Calu3 (cell line): ENCODE measurements at regions of chr1 and their contacts with region 1.

Region 1: DNA sequence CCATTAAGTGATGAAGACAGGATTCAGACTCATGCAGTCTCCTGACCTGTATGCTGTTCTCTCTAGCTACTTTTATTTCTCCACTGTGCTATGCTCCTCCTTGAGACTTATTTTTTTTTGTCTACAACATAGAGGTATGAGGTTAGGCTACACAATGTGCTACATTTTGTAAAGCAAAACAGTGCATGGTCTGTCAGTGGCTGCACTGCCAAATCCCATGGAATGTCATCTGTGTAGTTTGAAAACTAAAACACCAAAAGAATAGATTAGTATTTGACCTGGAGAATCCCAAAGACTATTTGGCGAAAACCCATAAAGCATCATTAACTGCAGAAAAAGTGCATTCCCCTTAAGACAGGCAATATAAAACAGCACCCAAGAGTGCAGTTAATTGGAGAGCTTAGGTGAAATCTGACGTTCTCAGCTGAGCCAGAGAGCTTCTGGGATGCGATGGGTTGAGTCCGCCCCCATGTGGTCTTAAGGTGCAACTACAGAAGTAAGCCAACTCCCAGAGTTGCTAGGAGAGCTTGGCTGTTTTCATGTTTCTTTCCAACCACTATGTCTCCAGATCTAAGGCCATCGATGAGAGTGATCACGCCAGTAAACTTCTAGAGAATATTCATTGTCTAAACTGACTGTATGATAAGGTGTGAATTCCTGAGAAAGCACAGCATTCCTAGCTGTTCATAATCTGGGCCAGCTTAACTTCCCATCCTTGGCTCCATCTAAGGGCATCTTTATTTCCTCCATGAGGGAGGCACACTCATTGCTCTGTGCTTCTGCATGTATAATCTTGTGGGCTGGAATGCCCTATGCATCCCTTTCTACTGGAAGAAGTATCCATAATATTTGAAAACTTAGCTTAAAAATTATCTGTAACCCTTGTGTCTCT is 20.7 kb upstream of the CYP2J2 start:
- DNase-seq: peak; percentile 67
- H3K4me3 Mint-ChIP-seq: no peak overlapping the region
- H3K27ac Mint-ChIP-seq: no peak overlapping the region
- H3K4me1 Mint-ChIP-seq: no peaks in the 10 kb centered on the region
- H3K27me3 Mint-ChIP-seq: no peaks in the 10 kb centered on the region
- CTCF ChIP-seq: peak; percentile 95

Region 2: GRCh38 chr1:59879574-59879973 is 67.7 kb before region 1 on chr1:
- CTCF ChIA-PET with region 1: interaction called, 71 read pairs
- intact Hi-C with region 1: loop called (anchors 1 kb)
- DNase-seq: peak; percentile 80
- H3K4me3 Mint-ChIP-seq: no peak overlapping the region
- H3K27ac Mint-ChIP-seq: no peak overlapping the region
- H3K4me1 Mint-ChIP-seq: no peaks in the 10 kb centered on the region
- H3K27me3 Mint-ChIP-seq: no peaks in the 10 kb centered on the region
- CTCF ChIP-seq: peak; percentile 63

Region 3: GRCh38 chr1:59892841-59893811 is 54.2 kb before region 1 on chr1:
- CTCF ChIA-PET with region 1: interaction called, 13 read pairs
- intact Hi-C with region 1: no loop called
- DNase-seq: peak; percentile 24
- H3K4me3 Mint-ChIP-seq: peak overlapping the region; percentile 15
- H3K27ac Mint-ChIP-seq: peak overlapping the region; percentile 74
- H3K4me1 Mint-ChIP-seq: peaks cover 43% of the 10 kb centered on the region
- H3K27me3 Mint-ChIP-seq: no peaks in the 10 kb centered on the region
- CTCF ChIP-seq: no peak

Region 4: GRCh38 chr1:59903141-59903754 is 44.0 kb before region 1 on chr1:
- CTCF ChIA-PET with region 1: interaction called, 3 read pairs
- intact Hi-C with region 1: loop called (anchors 1 kb)
- DNase-seq: peak; percentile 18
- H3K4me3 Mint-ChIP-seq: no peak overlapping the region
- H3K27ac Mint-ChIP-seq: no peak overlapping the region
- H3K4me1 Mint-ChIP-seq: no peaks in the 10 kb centered on the region
- H3K27me3 Mint-ChIP-seq: no peaks in the 10 kb centered on the region
- CTCF ChIP-seq: peak; percentile 44

Region 5: GRCh38 chr1:60886793-60887331 is 939.6 kb after region 1 on chr1:
- CTCF ChIA-PET with region 1: no interaction called
- intact Hi-C with region 1: no loop called
- DNase-seq: no peak
- H3K4me3 Mint-ChIP-seq: no peak overlapping the region
- H3K27ac Mint-ChIP-seq: no peak overlapping the region
- H3K4me1 Mint-ChIP-seq: no peaks in the 10 kb centered on the region
- H3K27me3 Mint-ChIP-seq: peaks cover 45% of the 10 kb centered on the region
- CTCF ChIP-seq: no peak